ENCODE measurements at regions of chr1 and their contacts with region 1.

Region 1: GRCh38 chr1:21931171-21932093 is 5.7 kb downstream of the HSPG2 start:
- DNase-seq: peak; percentile 85
- ATAC-seq: peak; percentile 33

Region 2: DNA sequence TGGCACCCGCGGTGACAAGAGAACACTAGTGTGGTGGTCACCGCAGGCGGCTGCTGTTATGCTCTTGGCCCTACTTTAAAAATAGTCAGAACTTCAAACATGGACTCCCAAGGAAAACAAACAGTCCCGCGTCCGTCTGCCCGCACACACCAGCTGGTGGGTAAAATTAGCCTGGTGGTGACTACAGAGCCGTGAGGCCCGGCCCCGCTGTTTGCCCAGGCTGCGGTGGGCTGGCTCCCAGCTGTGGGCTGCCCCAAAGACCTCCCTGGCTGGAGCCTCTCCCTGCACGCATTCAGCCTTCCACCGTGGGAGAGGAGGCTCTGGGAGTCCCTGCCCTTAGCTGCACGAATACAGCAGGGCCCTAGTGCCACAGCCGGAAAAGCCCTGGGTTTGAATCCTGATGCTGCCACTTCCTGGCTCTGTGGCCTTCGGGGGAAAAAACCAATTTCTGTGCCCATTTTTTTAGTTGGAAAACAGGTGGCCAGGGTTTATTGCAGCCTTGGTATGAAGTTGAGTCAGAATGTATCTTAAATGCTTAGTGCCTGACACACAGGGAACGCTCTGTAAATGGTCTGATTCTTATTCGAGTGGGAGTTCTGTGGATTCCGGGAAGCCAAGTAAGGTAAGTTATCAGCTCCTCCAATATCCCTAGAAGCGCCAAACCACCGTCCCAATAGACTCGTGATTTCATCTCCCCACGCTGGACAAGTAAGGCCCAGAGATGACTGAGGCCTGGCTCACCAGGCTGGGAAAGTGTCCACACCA is 364.0 kb before region 1 on chr1:
- intact Hi-C with region 1: no loop called
- DNase-seq: no peak
- ATAC-seq: no peak

Region 3: GRCh38 chr1:21896652-21897532 is 34.5 kb before region 1 on chr1:
- intact Hi-C with region 1: loop called (anchors 5 kb)
- DNase-seq: peak; percentile 88
- ATAC-seq: peak; percentile 89

Region 4: DNA sequence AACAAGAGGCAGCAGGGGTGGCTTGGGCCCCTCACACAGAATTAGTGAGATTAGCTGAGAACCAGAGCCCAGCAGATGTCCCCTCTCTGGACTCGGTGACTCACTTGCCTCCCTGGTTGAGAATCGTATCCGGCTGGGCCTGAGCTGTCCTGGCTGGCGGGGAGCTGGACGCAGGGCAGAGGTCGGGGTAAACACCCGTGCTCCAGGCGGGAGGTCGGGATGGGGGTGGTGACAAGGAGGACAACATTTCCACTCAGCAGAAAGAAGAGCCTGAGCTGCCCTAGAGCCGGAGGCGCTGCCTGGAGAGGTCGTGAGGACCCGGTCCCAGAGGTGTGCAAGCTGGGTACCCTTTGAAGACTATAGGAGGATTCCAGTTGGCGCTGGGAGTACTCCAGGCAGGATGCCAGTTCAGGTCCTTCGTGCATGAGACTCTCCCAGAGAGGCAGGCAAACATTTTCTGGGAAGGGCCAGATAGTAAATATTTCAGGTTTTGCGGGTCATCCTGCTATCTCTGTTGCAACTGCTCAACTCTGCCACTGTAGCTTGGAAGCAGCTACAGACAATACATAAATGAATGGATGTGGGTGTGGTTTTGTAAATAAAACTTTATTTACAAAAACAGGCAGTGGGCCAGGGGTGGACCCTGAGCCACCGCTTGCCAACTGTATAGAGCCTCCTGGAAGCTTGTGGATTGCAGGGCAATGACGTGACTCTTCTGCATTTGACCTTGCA is 328.3 kb after region 1 on chr1:
- intact Hi-C with region 1: no loop called
- DNase-seq: no peak
- ATAC-seq: no peak